HAP-1 (cell line): ENCODE measurements at regions of chr4 and their contacts with region 1.

Region 1: DNA sequence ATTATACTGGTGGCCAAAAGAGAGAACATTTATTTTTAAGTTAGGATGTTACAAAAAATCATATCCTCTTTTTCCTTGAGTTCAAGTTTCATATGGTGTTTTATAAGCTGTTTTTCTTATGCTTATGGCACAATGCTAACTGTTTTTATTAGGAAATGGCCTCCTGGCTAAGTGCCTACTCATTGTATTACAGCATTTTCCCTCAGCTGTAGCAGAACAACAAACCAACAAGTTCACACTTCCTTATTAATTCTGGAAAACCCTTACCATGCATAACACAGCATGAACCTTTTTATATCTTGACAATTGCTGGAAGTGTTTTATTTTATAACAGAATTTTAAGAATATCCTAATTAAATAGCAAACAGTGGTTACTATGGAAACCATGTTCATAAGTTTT is 165.8 kb downstream of the GASK1B start:
- DNase-seq: no peak
- H3K4me3 ChIP-seq: no peak overlapping the region
- H3K4me1 ChIP-seq: peaks cover 40% of the 10 kb centered on the region
- H3K27me3 ChIP-seq: no peaks in the 10 kb centered on the region

Region 2: GRCh38 chr4:157819675-157820464 is 187.1 kb before region 1 on chr4:
- in situ Hi-C with region 1: no loop called
- DNase-seq: no peak
- H3K4me3 ChIP-seq: no peak overlapping the region
- H3K4me1 ChIP-seq: no peaks in the 10 kb centered on the region
- H3K27me3 ChIP-seq: no peaks in the 10 kb centered on the region

Region 3: GRCh38 chr4:158161551-158162354 is 154.8 kb after region 1 on chr4:
- in situ Hi-C with region 1: loop called (anchors 5 kb)
- DNase-seq: peak; percentile 51 to 72
- H3K4me3 ChIP-seq: no peak overlapping the region
- H3K4me1 ChIP-seq: peaks cover 92% of the 10 kb centered on the region
- H3K27me3 ChIP-seq: no peaks in the 10 kb centered on the region